ENCODE measurements at regions of chr11 and their contacts with region 1.

Region 1: GRCh38 chr11:35617687-35618496 is at the start of gene FJX1:
- DNase-seq: peak; percentile 30
- H3K4me3 Mint-ChIP-seq: peak within 1 kb of the TSS; percentile 58
- H3K27ac Mint-ChIP-seq: no peak within 1 kb of the TSS
- H3K4me1 Mint-ChIP-seq: peaks cover 12% of the 10 kb centered on the region
- H3K27me3 Mint-ChIP-seq: peaks cover 58% of the 10 kb centered on the region
- total RNA-seq, gene FJX1: 0.46 to 0.62 TPM

Region 2: DNA sequence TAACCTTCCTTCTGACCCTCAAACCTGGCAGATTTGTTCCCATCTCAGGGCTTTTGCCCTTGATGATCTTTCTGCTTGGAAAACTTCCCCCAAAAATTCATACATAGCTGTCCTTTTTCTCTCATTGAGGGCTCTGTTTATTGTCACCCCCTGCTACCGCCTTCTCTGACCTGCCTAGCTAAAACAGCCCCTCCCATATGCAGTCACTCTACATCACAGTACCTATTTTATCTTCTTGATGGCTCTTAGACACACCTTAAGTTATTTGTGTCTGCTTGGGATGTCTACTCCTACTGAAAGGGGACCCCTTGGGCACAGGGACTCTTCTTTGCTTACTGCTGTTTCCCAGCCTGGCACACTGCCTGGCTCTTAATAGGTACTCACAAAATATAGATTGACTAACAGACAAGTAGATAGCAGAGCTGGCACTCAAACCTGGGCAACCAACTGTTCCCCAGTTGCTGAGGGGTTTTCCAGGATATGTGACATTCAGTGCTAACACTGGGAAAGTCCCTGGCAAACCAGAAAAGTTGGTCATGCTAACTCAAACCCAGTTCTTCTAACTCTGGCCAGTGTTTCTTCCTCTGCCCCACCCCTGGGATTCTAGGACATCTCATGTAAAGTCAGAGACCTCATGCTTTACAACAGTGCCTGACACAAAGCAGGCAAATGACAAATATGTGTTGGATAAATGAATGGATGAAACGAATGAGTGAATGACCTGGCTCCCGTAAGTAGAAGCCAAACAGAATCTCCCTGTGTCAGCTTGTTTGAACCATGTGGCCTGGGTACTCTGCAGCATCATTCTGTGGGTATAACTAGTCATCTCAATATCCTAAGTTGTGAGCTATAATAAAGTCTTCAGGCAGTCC is 19.4 kb before region 1 on chr11:
- CTCF ChIA-PET with region 1: interaction called, 11 read pairs
- POLR2A ChIA-PET with region 1: no interaction called
- intact Hi-C with region 1: no loop called
- DNase-seq: peak; percentile 59
- H3K4me3 Mint-ChIP-seq: no peak overlapping the region
- H3K27ac Mint-ChIP-seq: no peak overlapping the region
- H3K4me1 Mint-ChIP-seq: peaks cover 13% of the 10 kb centered on the region
- H3K27me3 Mint-ChIP-seq: peaks cover 30% of the 10 kb centered on the region

Region 3: GRCh38 chr11:35822815-35823495 is 205.1 kb after region 1 on chr11:
- CTCF ChIA-PET with region 1: interaction called, 44 read pairs
- POLR2A ChIA-PET with region 1: no interaction called
- intact Hi-C with region 1: loop called (anchors 1 kb)
- DNase-seq: no peak
- H3K4me3 Mint-ChIP-seq: no peak overlapping the region
- H3K27ac Mint-ChIP-seq: no peak overlapping the region
- H3K4me1 Mint-ChIP-seq: peaks cover 15% of the 10 kb centered on the region
- H3K27me3 Mint-ChIP-seq: no peaks in the 10 kb centered on the region

Region 4: GRCh38 chr11:36131721-36132397 is 514.0 kb after region 1 on chr11:
- CTCF ChIA-PET with region 1: interaction called, 3 read pairs
- POLR2A ChIA-PET with region 1: no interaction called
- intact Hi-C with region 1: loop called (anchors 1 kb)
- DNase-seq: peak; percentile 12
- H3K4me3 Mint-ChIP-seq: no peak overlapping the region
- H3K27ac Mint-ChIP-seq: no peak overlapping the region
- H3K4me1 Mint-ChIP-seq: no peaks in the 10 kb centered on the region
- H3K27me3 Mint-ChIP-seq: peaks cover 6% of the 10 kb centered on the region

Region 5: GRCh38 chr11:36258730-36259360 is 641.0 kb after region 1 on chr11:
- CTCF ChIA-PET with region 1: interaction called, 18 read pairs
- POLR2A ChIA-PET with region 1: no interaction called
- intact Hi-C with region 1: no loop called
- DNase-seq: peak; percentile 42
- H3K4me3 Mint-ChIP-seq: no peak overlapping the region
- H3K27ac Mint-ChIP-seq: no peak overlapping the region
- H3K4me1 Mint-ChIP-seq: no peaks in the 10 kb centered on the region
- H3K27me3 Mint-ChIP-seq: peaks cover 30% of the 10 kb centered on the region

Region 6: DNA sequence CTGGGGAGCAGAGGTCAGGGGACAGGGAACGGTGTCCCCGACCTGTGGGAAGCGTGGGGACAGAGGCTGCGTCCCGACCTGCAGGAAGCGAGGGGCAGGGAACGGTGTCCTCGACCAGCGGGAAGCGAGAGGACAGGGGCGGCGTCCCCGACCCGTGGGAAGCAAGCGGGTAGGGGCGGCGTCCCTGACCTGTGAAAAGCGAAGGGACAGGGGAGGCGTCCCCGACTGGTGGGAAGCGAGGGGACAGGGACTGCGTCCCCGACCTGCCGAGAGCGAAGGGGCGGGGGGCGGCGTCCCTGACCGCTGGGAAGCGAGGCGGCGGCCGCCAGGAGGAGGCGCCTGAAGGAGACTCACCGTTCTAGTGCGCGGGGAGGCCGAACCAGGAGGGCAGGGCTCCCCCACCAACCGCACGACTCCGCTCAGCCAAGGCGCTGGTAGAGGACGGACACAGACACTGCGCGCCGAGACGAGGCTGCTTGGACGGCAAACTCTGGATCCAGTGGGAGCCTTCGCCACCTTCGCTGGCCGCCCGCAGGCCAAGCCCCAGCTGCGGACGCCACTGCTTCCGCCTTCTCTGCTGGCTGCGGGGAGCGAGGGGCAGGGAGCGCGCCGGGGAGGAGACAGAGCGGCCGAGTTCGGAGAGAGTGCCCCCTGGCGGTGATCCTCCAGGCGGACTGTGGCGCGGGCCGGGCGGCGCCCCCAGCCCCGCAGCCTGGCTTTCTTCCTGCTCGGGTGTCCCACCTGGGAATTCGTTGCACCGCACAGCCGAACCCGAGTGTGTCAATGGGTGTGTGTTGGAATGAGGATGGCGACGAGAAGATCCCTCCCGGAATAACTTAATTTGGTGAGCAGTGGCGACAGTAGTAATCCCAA is 892.0 kb after region 1 on chr11 and contains the start of gene TRAF6:
- CTCF ChIA-PET with region 1: no interaction called
- POLR2A ChIA-PET with region 1: no interaction called
- intact Hi-C with region 1: loop called (anchors 10 kb)
- DNase-seq: peak; percentile 92
- H3K4me3 Mint-ChIP-seq: peak within 1 kb of the TSS; percentile 94
- H3K27ac Mint-ChIP-seq: peak within 1 kb of the TSS; percentile 86
- H3K4me1 Mint-ChIP-seq: peaks cover 27% of the 10 kb centered on the region
- H3K27me3 Mint-ChIP-seq: peaks cover 5% of the 10 kb centered on the region
- total RNA-seq, gene TRAF6: 12.0 to 12.1 TPM

Measured in activated CD4-positive, alpha-beta memory T cell treated with anti-CD3 and anti-CD28 coated beads for 36 hours (primary cell).